Right cardiac atrium (tissue), 5 donors: ENCODE measurements at regions of chr6 and their contacts with region 1.

Region 1: GRCh38 chr6:121849477-121849876 is 414.0 kb downstream of the GJA1 start:
- DNase-seq: peak in 1 of 3 donors; percentile 47
- ATAC-seq: peak; percentile 90 to 94
- H3K4me3 ChIP-seq: no peak overlapping the region
- H3K27ac ChIP-seq: no peak overlapping the region
- H3K4me1 ChIP-seq: peaks cover 5% of the 10 kb centered on the region
- H3K27me3 ChIP-seq: no peaks in the 10 kb centered on the region

Region 2: DNA sequence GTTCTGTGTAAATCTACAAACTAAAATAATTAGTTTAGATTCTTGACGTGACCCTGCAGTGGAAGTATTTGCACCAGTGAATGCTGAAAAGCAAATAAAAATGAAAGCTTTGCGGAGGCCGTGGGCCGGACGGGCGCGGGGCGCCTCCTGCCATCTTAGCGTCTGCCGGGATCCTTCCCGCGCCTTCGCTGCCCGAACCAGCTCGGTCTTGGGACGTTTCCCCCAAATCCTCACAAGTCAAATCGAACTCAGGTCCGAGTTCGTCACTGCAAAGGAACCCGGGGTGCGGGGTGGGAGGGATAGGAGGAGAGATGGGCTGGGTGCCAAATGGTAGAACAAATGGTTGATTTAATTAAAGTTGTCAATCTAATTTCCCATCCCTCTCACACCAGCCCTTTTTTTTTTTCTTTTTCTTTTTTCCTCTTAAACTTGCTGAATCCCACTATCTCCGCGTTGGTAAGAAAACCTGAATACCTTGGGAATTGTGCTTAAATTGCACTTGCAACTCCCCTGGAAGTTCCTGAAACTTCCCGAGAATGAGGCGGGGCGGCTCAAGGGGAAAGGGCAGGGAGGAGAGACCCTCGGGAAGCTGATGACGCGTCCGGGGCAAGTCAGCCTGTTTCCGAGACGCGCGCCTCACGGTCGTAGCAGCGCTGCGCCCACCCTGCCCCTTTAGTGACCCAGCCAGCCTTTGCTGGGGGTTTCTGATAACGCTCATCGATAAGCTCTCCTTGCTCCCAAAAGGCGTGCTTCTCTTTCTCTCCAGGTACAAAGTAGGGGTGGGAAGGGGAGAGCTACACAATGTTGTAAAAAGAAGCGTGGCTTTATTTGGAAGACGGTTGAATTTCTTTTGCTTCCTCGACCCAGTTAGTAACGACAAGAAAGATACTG is 412.3 kb before region 1 on chr6:
- intact Hi-C with region 1: loop called (anchors 2 to 10 kb)
- DNase-seq: peak; percentile 56 to 67 (median 65)
- ATAC-seq: peak; percentile 61 to 80
- H3K4me3 ChIP-seq: peak overlapping the region; percentile 91
- H3K27ac ChIP-seq: peak overlapping the region; percentile 91
- H3K4me1 ChIP-seq: no peaks in the 10 kb centered on the region
- H3K27me3 ChIP-seq: no peaks in the 10 kb centered on the region

Region 3: GRCh38 chr6:121771937-121772720 is 77.3 kb before region 1 on chr6:
- intact Hi-C with region 1: no loop called
- DNase-seq: no peak
- ATAC-seq: no peak
- H3K4me3 ChIP-seq: no peak overlapping the region
- H3K27ac ChIP-seq: no peak overlapping the region
- H3K4me1 ChIP-seq: no peaks in the 10 kb centered on the region
- H3K27me3 ChIP-seq: no peaks in the 10 kb centered on the region

Region 4: DNA sequence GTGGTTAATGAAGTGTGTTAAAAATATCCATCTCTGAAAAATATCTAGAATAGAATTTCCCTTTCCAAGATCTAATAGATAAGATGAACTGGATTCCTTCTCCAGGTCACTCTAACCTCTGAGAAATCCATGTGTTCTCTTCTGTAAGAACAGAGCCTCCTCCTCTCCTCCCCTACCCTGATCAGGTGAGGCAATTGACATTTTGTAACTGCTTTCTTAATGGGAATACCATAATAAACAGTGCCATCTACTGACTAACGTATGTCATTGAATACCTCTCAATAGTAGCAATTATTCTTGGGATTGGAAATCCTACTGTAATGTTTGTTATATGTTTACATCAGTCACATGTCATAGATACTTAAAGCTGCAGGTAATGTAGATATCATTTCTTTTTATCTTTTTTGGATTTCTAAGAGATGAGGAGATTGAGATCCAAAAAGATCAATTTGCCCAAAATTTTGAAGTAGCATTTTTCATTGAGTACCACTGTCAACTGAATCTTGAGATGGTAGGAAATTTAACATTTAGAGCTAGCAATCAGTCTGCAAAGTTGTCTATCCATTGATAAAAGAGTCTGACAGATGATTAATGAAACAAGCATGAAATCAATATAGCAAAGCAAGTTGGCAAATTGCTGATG is 184.2 kb after region 1 on chr6:
- intact Hi-C with region 1: loop called in 1 of 4 experiments (anchors 10 kb)
- DNase-seq: no peak
- ATAC-seq: peak; percentile 78 to 85
- H3K4me3 ChIP-seq: no peak overlapping the region
- H3K27ac ChIP-seq: no peak overlapping the region
- H3K4me1 ChIP-seq: no peaks in the 10 kb centered on the region
- H3K27me3 ChIP-seq: no peaks in the 10 kb centered on the region